Adrenal gland (tissue), 19 donors: ENCODE measurements at regions of chr2 and their contacts with region 1.

Region 1: GRCh38 chr2:74250189-74250631 is 51.8 kb downstream of the MTHFD2 start:
- DNase-seq: peak in 6 of 7 donors; percentile 41 to 70 (median 54)
- H3K4me3 ChIP-seq: no peak overlapping the region
- H3K27ac ChIP-seq: no peak overlapping the region
- H3K4me1 ChIP-seq: no peaks in the 10 kb centered on the region
- H3K27me3 ChIP-seq: no peaks in the 10 kb centered on the region
- CTCF ChIP-seq: peak; percentile 59 to 84 (median 72)
- POLR2A ChIP-seq: no peak

Region 2: GRCh38 chr2:74092275-74092674 is 157.9 kb before region 1 on chr2:
- intact Hi-C with region 1: no loop called
- DNase-seq: peak in 1 of 7 donors; percentile 46
- H3K4me3 ChIP-seq: no peak overlapping the region
- H3K27ac ChIP-seq: peak overlapping the region in 1 of 5 donors; percentile 55
- H3K4me1 ChIP-seq: no peaks in the 10 kb centered on the region
- H3K27me3 ChIP-seq: no peaks in the 10 kb centered on the region
- CTCF ChIP-seq: no peak
- POLR2A ChIP-seq: no peak

Region 3: GRCh38 chr2:74317701-74318301 is 67.6 kb after region 1 on chr2:
- intact Hi-C with region 1: loop called in 1 of 2 experiments (anchors 5 kb)
- DNase-seq: no peak
- H3K4me3 ChIP-seq: peak overlapping the region in 1 of 4 donors; percentile 4
- H3K27ac ChIP-seq: no peak overlapping the region
- H3K4me1 ChIP-seq: no peaks in the 10 kb centered on the region
- H3K27me3 ChIP-seq: no peaks in the 10 kb centered on the region
- CTCF ChIP-seq: no peak
- POLR2A ChIP-seq: no peak

Region 4: DNA sequence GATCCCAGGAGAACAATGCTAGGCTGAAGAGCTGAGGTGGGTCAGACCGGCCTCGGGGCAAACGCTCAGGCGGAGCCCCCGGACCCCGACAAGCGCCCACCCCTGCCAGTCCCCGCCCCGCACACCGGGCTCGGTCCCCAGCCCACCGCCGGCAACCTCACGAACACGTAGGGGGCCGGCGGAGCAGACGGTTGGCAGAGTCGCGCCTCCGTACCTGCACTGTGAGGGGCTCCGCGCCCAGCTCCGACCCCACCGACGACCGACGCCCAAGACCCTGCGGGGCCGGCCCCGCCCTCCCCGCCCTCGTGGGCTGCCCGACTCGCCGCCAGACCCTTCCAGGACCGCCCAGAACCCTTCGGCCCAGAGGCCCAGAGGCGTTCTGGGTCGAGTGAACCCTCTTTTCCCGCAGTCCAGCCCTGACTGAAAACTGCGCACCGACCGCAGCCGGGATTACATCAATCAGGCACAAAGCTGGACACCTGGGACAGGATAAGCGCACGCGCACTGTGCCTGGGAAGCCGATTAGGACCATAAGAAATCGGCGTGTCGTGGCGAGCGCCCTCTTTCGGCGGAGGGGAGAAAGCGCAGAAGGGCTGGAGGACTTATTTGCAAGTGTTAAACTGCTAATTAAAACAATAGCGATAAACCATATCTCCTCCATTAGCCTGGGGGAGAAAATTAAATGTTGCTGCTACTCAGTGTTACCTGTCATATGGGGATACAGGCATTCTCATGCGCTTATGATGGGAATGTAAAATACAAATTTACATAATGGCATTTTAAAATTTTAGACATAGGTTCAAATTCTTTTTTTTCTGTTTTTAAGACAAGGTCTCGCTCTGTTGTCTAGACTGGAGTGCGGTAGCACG is 141.6 kb after region 1 on chr2:
- intact Hi-C with region 1: loop called in 1 of 2 experiments (anchors 10 kb)
- DNase-seq: peak; percentile 89 to 95 (median 93)
- H3K4me3 ChIP-seq: peak overlapping the region in 3 of 4 donors; percentile 2 to 85 (median 78)
- H3K27ac ChIP-seq: peak overlapping the region in 4 of 5 donors; percentile 64 to 92 (median 86)
- H3K4me1 ChIP-seq: peaks cover 20 to 40% of the 10 kb centered on the region in 2 donors
- H3K27me3 ChIP-seq: no peaks in the 10 kb centered on the region
- CTCF ChIP-seq: peak; percentile 91 to 98 (median 94)
- POLR2A ChIP-seq: peak in 1 of 2 donors; percentile 37

Region 5: GRCh38 chr2:74587664-74588277 is 337.6 kb after region 1 on chr2:
- intact Hi-C with region 1: loop called in 1 of 2 experiments (anchors 10 kb)
- DNase-seq: peak; percentile 62 to 87 (median 75)
- H3K4me3 ChIP-seq: no peak overlapping the region
- H3K27ac ChIP-seq: no peak overlapping the region
- H3K4me1 ChIP-seq: no peaks in the 10 kb centered on the region
- H3K27me3 ChIP-seq: no peaks in the 10 kb centered on the region
- CTCF ChIP-seq: peak; percentile 55 to 81 (median 74)
- POLR2A ChIP-seq: no peak

Region 6: DNA sequence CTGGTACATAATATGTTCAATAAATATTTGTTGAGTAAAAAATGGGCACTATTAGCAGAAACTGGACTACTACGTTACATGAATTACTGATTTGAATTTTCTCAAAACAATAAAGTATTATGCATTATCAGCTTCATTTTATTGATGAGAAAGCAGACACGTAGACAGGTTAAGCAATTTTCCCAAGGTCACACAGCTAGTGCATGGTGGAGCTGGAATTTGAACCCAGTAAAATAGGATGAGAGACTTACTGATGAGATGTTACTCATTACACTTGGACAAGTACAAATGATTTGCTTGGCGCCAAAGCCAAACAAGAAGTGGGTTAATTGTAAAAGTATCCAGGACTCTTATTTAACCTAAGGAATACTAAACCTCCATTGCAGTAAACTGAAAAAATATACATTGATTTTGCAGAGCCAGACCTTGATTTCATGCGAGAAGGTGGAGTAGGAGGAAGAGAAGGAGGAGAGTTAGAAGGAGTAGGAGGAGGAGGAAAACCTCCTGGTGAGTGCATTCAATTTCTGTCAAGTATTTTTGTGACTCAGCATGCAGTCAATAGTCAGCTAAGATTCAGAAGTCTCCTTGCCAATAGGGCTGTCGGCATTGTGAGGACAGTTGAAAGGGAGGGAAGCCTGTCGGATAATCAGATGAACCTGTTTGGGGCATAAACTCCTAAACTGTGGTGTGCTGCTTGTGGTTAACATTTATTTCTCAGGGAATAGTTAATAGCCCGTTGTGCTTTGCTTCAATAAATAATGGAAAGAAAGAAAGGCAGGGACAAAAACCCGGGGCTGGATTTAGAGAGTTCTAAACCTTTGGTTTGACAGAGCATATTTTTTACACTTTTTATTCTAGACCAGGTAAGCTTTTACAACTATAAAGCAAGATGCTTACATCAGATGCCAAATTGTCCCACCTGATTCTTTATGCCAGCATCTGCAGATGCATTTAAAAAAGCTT is 1026.2 kb after region 1 on chr2:
- intact Hi-C with region 1: no loop called
- DNase-seq: no peak
- H3K4me3 ChIP-seq: no peak overlapping the region
- H3K27ac ChIP-seq: no peak overlapping the region
- H3K4me1 ChIP-seq: no peaks in the 10 kb centered on the region
- H3K27me3 ChIP-seq: no peaks in the 10 kb centered on the region
- CTCF ChIP-seq: no peak
- POLR2A ChIP-seq: no peak